Activated CD4-positive, alpha-beta memory T cell treated with anti-CD3 and anti-CD28 coated beads for 36 hours (primary cell): ENCODE measurements at regions of chr11 and their contacts with region 1.

Region 1: GRCh38 chr11:129279326-129280026 is 87.4 kb upstream of the ARHGAP32 start:
- DNase-seq: peak; percentile 67
- H3K4me3 Mint-ChIP-seq: peak overlapping the region; percentile 65
- H3K27ac Mint-ChIP-seq: peak overlapping the region; percentile 19
- H3K4me1 Mint-ChIP-seq: peaks cover 12% of the 10 kb centered on the region
- H3K27me3 Mint-ChIP-seq: peaks cover 25% of the 10 kb centered on the region

Region 2: GRCh38 chr11:129117595-129118350 is 161.7 kb before region 1 on chr11:
- CTCF ChIA-PET with region 1: no interaction called
- POLR2A ChIA-PET with region 1: no interaction called
- intact Hi-C with region 1: loop called (anchors 2 kb)
- DNase-seq: peak; percentile 51
- H3K4me3 Mint-ChIP-seq: no peak overlapping the region
- H3K27ac Mint-ChIP-seq: no peak overlapping the region
- H3K4me1 Mint-ChIP-seq: no peaks in the 10 kb centered on the region
- H3K27me3 Mint-ChIP-seq: no peaks in the 10 kb centered on the region

Region 3: DNA sequence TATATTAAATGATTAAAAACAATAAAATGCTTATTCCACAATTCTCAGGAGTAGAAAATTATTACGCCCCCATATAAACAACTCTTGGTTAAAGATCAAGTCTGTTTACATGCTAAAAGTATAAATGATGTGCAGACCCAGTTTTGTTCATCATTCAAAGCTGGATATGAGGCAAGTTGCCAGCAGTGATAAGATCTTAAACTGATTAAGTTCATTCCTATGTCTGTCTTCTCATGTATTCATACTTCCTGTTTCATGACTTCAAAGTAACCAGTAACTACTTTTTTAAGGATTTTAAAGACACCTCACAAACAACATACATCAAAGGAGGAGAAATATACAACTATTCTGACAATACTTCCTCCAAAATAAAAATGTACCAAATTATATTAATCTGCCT is 32.3 kb before region 1 on chr11:
- CTCF ChIA-PET with region 1: no interaction called
- POLR2A ChIA-PET with region 1: interaction called, 4 read pairs
- intact Hi-C with region 1: loop called (anchors 2 kb)
- DNase-seq: no peak
- H3K4me3 Mint-ChIP-seq: no peak overlapping the region
- H3K27ac Mint-ChIP-seq: no peak overlapping the region
- H3K4me1 Mint-ChIP-seq: peaks cover 19% of the 10 kb centered on the region
- H3K27me3 Mint-ChIP-seq: no peaks in the 10 kb centered on the region

Region 4: GRCh38 chr11:129300099-129300498 is 20.6 kb after region 1 on chr11:
- CTCF ChIA-PET with region 1: no interaction called
- POLR2A ChIA-PET with region 1: no interaction called
- intact Hi-C with region 1: loop called (anchors 2 kb)
- DNase-seq: no peak
- H3K4me3 Mint-ChIP-seq: no peak overlapping the region
- H3K27ac Mint-ChIP-seq: no peak overlapping the region
- H3K4me1 Mint-ChIP-seq: peaks cover 13% of the 10 kb centered on the region
- H3K27me3 Mint-ChIP-seq: peaks cover 24% of the 10 kb centered on the region